A673 (cell line): ENCODE measurements at regions of chr22 and their contacts with region 1.

Region 1: DNA sequence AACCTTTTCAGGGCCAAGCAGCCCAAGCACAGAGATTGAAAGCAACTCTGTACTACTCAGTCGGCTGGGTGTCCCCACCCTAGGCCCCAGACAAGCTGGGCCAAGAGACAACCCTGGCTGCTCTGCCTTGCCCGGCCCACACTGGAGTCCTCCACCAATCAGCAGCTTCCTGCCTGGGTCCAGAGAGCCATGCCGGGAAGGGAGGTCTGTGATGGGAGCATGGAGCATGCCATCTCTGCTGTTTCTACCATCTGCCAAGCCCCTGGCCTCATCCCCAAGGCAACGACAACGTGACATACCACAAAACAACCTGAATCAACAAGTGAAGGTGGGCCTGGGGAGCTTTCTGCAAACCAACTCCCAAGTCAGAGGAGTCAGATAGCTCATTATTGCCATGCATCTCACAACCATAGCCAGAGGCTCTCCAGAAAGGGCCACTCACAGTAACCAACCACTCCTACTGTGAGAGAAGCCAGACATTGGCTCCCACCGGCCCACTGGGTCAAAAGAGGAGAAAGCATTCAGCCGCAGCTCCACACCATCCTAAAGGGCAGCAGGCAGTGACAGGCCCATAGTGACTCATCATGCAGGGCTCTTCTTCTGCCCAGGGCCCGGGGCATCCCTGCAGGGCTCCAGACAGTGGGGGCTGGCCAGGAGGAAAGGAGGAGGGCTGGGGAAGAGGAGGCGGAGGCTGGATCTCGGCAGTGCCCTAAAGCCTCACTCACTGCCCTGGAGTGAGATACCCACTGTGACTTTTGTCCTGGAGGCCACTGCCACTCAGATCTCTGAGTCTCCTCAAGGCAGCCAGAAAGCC is 18.1 kb downstream of the PATZ1 start:
- DNase-seq: no peak
- H3K4me3 ChIP-seq: no peak overlapping the region
- H3K27ac ChIP-seq: no peak overlapping the region
- H3K4me1 ChIP-seq: no peaks in the 10 kb centered on the region
- H3K27me3 ChIP-seq: no peaks in the 10 kb centered on the region
- CTCF ChIP-seq: no peak

Region 2: DNA sequence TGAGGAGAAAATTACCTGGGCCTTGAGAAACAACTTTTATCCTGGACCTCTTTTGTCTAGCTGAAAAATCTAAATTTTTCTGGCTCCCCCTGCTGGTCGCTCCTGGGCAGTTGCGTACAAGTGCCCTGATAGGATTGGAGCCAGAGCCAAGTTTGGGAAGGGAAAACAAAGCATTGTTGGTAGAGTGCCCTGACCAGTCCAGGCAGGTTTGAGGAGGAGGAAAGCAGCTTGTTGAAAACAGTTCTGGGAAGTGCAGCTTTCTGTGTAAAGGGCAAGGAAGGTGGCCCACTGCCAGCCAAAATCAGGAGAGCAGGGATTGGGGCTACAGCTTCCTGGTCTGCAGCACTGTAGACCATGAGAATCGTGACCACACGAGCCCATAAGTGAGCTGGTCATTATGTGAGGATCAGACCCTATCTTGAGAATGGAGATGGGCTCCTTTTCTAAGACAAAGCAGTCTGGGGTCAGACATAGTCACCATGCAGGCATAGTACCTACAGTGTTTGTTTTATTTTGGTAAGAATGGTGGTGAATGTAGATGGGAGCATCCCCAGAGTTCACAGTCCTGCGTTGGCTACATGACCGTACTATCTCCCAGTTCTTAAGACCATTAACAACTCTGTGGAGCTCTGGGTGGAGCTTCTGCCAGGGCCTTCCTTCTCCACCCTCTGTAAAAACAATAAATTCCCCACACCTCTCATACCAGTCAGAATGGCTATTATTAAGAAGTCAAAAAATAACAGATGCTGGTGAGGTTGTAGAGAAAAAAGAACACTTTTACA is 14.5 kb before region 1 on chr22:
- CTCF ChIA-PET with region 1: interaction called, 17 read pairs
- POLR2A ChIA-PET with region 1: interaction called, 3 read pairs
- intact Hi-C with region 1: no loop called
- DNase-seq: peak; percentile 62
- H3K4me3 ChIP-seq: no peak overlapping the region
- H3K27ac ChIP-seq: no peak overlapping the region
- H3K4me1 ChIP-seq: no peaks in the 10 kb centered on the region
- H3K27me3 ChIP-seq: no peaks in the 10 kb centered on the region
- CTCF ChIP-seq: peak; percentile 92